Common myeloid progenitor, CD34-positive (primary cell): ENCODE measurements at regions of chr13 and their contacts with region 1.

Region 1: GRCh38 chr13:100039740-100040139 is 49.2 kb upstream of the PCCA start:
- DNase-seq: no peak
- H3K4me3 ChIP-seq: no peak overlapping the region
- H3K27ac ChIP-seq: no peak overlapping the region
- H3K4me1 ChIP-seq: no peaks in the 10 kb centered on the region
- H3K27me3 ChIP-seq: no peaks in the 10 kb centered on the region

Region 2: GRCh38 chr13:99758460-99759162 is 281.1 kb before region 1 on chr13:
- CTCF ChIA-PET with region 1: no interaction called
- POLR2A ChIA-PET with region 1: no interaction called
- DNase-seq: peak in 1 of 3 donors; percentile 6
- H3K4me3 ChIP-seq: no peak overlapping the region
- H3K27ac ChIP-seq: no peak overlapping the region
- H3K4me1 ChIP-seq: peaks cover 0 to 7% (median 0%) of the 10 kb centered on the region in 4 experiments
- H3K27me3 ChIP-seq: no peaks in the 10 kb centered on the region

Region 3: GRCh38 chr13:99830931-99831330 is 208.8 kb before region 1 on chr13:
- CTCF ChIA-PET with region 1: no interaction called
- POLR2A ChIA-PET with region 1: interaction called, 15 read pairs
- DNase-seq: no peak
- H3K4me3 ChIP-seq: no peak overlapping the region
- H3K27ac ChIP-seq: no peak overlapping the region
- H3K4me1 ChIP-seq: no peaks in the 10 kb centered on the region
- H3K27me3 ChIP-seq: no peaks in the 10 kb centered on the region